Caco-2 (cell line): ENCODE measurements at regions of chr14 and their contacts with region 1.

Region 1: GRCh38 chr14:93184388-93185353 is at the starts of genes LYSET and MOAP1:
- DNase-seq: peak; percentile 88 to 91
- H3K4me3 ChIP-seq: peak within 1 kb of the TSS; percentile 100
- H3K4me3 Mint-ChIP-seq: peak within 1 kb of the TSS; percentile 86
- H3K27ac Mint-ChIP-seq: peak within 1 kb of the TSS; percentile 8
- H3K4me1 ChIP-seq: no peaks in the 10 kb centered on the region; the same call in 1 of the 2 replicates
- H3K4me1 Mint-ChIP-seq: no peaks in the 10 kb centered on the region
- H3K27me3 ChIP-seq: no peaks in the 10 kb centered on the region
- H3K27me3 Mint-ChIP-seq: no peaks in the 10 kb centered on the region
- CTCF ChIP-seq: peak; percentile 6 to 22
- total RNA-seq, gene LYSET: 17.3 and 17.4 TPM in 2 replicates
- total RNA-seq, gene MOAP1: 11.5 and 12.2 TPM in 2 replicates

Region 2: GRCh38 chr14:93128725-93129459 is 55.8 kb before region 1 on chr14:
- CTCF ChIA-PET with region 1: no interaction called
- POLR2A ChIA-PET with region 1: no interaction called
- intact Hi-C with region 1: no loop called
- DNase-seq: no peak
- H3K4me3 ChIP-seq: no peak overlapping the region
- H3K4me3 Mint-ChIP-seq: no peak overlapping the region
- H3K27ac Mint-ChIP-seq: no peak overlapping the region
- H3K4me1 ChIP-seq: no peaks in the 10 kb centered on the region
- H3K4me1 Mint-ChIP-seq: no peaks in the 10 kb centered on the region
- H3K27me3 ChIP-seq: no peaks in the 10 kb centered on the region
- H3K27me3 Mint-ChIP-seq: no peaks in the 10 kb centered on the region
- CTCF ChIP-seq: no peak

Region 3: GRCh38 chr14:93219103-93219726 is 34.5 kb after region 1 on chr14:
- CTCF ChIA-PET with region 1: interaction called, 5 read pairs
- POLR2A ChIA-PET with region 1: no interaction called
- intact Hi-C with region 1: loop called (anchors 1 kb)
- DNase-seq: peak; percentile 53 to 58
- H3K4me3 ChIP-seq: no peak overlapping the region
- H3K4me3 Mint-ChIP-seq: no peak overlapping the region
- H3K27ac Mint-ChIP-seq: no peak overlapping the region
- H3K4me1 ChIP-seq: no peaks in the 10 kb centered on the region
- H3K4me1 Mint-ChIP-seq: no peaks in the 10 kb centered on the region
- H3K27me3 ChIP-seq: no peaks in the 10 kb centered on the region
- H3K27me3 Mint-ChIP-seq: no peaks in the 10 kb centered on the region
- CTCF ChIP-seq: peak; percentile 47 to 77